ENCODE measurements at regions of chr17 and their contacts with region 1.

Region 1: DNA sequence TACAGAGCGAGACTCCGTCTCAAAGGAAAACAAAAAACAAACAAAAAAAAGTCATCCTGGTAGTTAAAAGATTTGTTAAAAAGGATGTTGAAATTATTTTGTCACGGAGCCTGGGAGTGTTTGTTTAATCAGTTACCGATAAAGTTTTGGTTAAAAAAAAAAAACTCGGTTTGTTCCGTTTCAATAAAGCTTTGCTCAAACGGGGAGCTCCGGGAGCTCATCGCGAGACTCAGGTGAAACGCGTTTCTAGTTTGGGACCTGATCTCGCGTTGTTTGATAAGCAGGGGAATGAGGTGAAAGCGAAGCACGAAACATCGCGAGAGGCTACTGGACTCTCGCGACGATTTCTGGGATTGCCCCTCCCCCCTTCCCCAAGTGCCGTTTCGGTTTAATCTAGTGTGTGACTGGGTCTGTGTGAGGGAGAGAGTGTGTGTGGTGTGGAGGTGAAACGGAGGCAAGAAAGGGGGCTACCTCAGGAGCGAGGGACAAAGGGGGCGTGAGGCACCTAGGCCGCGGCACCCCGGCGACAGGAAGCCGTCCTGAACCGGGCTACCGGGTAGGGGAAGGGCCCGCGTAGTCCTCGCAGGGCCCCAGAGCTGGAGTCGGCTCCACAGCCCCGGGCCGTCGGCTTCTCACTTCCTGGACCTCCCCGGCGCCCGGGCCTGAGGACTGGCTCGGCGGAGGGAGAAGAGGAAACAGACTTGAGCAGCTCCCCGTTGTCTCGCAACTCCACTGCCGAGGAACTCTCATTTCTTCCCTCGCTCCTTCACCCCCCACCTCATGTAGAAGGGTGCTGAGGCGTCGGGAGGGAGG is at the start of gene CDK12:
- DNase-seq: peak; percentile 99
- CTCF ChIP-seq: no peak

Region 2: DNA sequence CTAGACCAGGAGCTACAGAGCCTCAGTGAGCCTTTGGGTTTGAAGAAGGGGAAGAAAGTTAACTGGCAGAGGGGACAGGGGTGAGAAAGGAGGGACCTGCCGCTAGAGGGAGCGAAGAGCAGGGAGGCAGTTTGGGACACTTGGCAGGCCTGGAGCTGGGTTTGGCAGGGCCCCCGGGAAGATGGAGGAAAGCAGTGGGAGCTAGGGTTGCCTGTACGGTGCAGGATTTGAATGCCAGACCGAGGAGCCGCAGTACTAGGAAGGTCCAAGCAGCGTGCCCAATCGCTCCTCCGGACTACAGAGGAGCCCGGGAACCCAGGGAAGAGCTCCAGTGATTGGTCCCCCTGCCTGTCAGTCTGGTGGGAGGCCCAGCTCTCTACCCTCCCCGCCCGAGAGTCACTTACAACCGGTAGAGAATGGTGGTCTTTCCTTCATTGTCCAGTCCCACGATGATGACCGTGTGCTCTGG is 296.6 kb before region 1 on chr17:
- CTCF ChIA-PET with region 1: no interaction called
- POLR2A ChIA-PET with region 1: no interaction called
- DNase-seq: peak; percentile 97
- CTCF ChIP-seq: peak; percentile 75

Region 3: GRCh38 chr17:39450847-39451581 is 10.3 kb before region 1 on chr17 and contains the start of gene MED1:
- CTCF ChIA-PET with region 1: interaction called, 4 read pairs
- POLR2A ChIA-PET with region 1: interaction called, 23 read pairs
- DNase-seq: peak; percentile 98
- CTCF ChIP-seq: no peak

Region 4: DNA sequence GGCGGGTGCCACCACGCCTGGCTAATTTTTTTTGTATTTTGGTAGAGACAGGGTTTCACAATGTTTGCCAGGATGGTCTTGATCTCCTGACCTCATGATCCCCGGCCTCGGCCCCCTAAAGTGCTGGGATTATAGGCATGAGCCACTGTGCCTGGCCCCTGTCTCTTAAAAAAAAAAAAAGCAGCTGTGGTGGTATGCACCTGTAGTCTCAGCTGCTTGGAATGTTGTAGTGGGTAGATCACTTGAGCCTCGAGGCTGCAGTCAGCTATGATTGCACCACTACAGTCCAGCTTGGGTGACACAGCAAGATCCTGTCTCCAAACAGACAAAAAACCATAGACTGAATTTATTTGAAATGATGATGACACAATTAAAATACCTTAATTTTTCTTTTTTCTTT is 24.2 kb after region 1 on chr17:
- CTCF ChIA-PET with region 1: interaction called, 3 read pairs
- POLR2A ChIA-PET with region 1: interaction called, 21 read pairs
- DNase-seq: no peak
- CTCF ChIP-seq: no peak